ENCODE measurements at regions of chr7 and their contacts with region 1.

Region 1: GRCh38 chr7:92731335-92732063 is 104.9 kb downstream of the CDK6 start:
- DNase-seq: peak; percentile 58
- ATAC-seq: peak; percentile 78
- H3K4me3 Mint-ChIP-seq: no peak overlapping the region
- H3K27ac Mint-ChIP-seq: peak overlapping the region; percentile 90
- H3K4me1 Mint-ChIP-seq: peaks cover 55% of the 10 kb centered on the region
- H3K27me3 Mint-ChIP-seq: no peaks in the 10 kb centered on the region
- CTCF ChIP-seq: no peak

Region 2: DNA sequence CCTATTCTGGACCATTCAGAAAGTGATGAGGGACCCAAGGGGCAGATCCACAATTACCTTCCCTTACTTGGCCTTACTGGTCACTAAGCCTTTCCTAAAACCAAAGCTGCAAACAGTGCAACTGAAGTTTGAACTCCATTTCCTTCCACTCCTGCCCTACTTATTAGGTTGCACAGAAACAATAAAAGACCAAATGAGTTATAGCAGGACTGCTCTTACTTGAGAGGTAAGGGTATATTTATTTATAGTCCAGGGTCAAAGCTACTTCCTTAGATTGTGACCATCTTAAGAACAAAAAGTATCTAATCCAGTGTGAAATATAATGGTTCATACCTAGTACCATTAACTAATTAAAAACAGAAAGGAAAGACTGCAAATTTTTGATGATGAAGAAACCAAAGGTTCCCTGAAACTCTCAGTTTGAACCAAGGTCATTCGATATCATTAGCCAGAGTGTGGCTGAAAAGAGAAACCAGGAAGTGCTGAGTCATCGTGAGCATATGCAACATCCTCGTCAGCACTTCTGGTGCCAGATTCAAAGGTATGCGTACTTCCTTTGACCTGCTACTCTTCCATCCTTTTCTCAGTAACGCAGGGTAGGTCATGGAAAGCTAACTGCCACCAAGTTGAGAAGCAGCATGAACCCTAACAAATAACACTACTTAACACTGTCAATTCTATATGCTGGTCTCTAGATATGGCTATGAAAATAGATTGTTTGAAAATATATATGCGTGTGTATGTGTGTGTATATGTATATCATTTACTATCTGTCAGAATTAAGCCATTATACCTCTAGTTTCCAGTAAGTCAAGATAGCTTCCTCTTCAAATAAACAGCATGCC is 78.1 kb after region 1 on chr7:
- CTCF ChIA-PET with region 1: interaction called, 3 read pairs
- POLR2A ChIA-PET with region 1: interaction called, 5 read pairs
- intact Hi-C with region 1: loop called (anchors 1 kb)
- DNase-seq: peak; percentile 81
- ATAC-seq: peak; percentile 64
- H3K4me3 Mint-ChIP-seq: peak overlapping the region; percentile 38
- H3K27ac Mint-ChIP-seq: peak overlapping the region; percentile 92
- H3K4me1 Mint-ChIP-seq: peaks cover 69% of the 10 kb centered on the region
- H3K27me3 Mint-ChIP-seq: no peaks in the 10 kb centered on the region
- CTCF ChIP-seq: no peak

Measured in activated CD8-positive, alpha-beta T cell treated with anti-CD3 and anti-CD28 coated beads for 36 hours (primary cell).